Right cardiac atrium (tissue), 5 donors: ENCODE measurements at regions of chr2 and their contacts with region 1.

Region 1: GRCh38 chr2:196291873-196292800 is 120.8 kb upstream of the STK17B start:
- DNase-seq: no peak
- ATAC-seq: peak in 1 of 2 donors; percentile 7
- H3K4me3 ChIP-seq: no peak overlapping the region
- H3K27ac ChIP-seq: no peak overlapping the region
- H3K4me1 ChIP-seq: no peaks in the 10 kb centered on the region
- H3K27me3 ChIP-seq: no peaks in the 10 kb centered on the region

Region 2: DNA sequence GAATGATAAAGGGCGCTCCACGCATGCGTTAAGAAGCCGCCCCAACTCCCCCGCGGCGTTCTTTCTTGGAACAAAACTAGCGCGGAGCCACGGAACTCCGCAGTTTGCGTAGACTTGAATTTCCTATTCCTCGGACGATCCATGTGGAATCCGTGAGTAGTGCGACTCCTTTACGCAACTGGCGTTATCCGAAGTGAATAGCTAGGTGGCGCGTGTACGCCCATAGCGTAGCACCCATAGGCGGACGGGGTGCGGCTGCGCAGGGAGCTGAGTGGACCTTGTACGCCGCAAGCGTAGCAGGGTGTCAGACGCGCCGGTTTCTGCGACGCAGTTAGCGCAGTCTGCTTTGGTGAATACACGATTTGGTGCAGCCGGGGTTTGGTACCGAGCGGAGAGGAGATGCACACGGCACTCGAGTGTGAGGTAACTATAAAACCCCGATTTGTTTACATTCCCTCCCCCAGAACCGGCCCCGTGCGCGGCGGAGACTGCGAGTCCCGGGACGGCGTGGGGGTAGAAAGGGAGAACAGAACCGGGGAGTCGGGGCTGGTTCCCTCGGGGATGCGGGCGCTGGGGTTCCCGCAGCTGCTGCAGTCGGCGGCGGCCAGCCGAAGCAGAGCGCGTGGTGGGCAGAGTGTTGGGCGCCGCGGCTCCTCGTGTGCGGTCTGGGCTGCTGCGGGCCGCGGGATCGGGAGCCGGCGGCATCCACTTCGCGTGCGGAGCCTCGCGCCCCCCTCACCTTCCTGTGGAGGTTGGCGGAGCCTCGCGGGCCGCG is 635.1 kb before region 1 on chr2 and contains the start of gene SLC39A10:
- intact Hi-C with region 1: no loop called
- DNase-seq: peak; percentile 97 to 99 (median 98)
- ATAC-seq: peak; percentile 94 to 95
- H3K4me3 ChIP-seq: peak within 1 kb of the TSS; percentile 92
- H3K27ac ChIP-seq: peak within 1 kb of the TSS; percentile 86
- H3K4me1 ChIP-seq: no peaks in the 10 kb centered on the region
- H3K27me3 ChIP-seq: no peaks in the 10 kb centered on the region
- total RNA-seq, gene SLC39A10: 13.3 to 17.9 (median 14.5) TPM

Region 3: GRCh38 chr2:196453613-196454047 is 161.5 kb after region 1 on chr2:
- intact Hi-C with region 1: loop called in 3 of 4 experiments (anchors 5 to 10 kb)
- DNase-seq: no peak
- ATAC-seq: peak in 1 of 2 donors; percentile 63
- H3K4me3 ChIP-seq: no peak overlapping the region
- H3K27ac ChIP-seq: no peak overlapping the region
- H3K4me1 ChIP-seq: no peaks in the 10 kb centered on the region
- H3K27me3 ChIP-seq: no peaks in the 10 kb centered on the region

Region 4: DNA sequence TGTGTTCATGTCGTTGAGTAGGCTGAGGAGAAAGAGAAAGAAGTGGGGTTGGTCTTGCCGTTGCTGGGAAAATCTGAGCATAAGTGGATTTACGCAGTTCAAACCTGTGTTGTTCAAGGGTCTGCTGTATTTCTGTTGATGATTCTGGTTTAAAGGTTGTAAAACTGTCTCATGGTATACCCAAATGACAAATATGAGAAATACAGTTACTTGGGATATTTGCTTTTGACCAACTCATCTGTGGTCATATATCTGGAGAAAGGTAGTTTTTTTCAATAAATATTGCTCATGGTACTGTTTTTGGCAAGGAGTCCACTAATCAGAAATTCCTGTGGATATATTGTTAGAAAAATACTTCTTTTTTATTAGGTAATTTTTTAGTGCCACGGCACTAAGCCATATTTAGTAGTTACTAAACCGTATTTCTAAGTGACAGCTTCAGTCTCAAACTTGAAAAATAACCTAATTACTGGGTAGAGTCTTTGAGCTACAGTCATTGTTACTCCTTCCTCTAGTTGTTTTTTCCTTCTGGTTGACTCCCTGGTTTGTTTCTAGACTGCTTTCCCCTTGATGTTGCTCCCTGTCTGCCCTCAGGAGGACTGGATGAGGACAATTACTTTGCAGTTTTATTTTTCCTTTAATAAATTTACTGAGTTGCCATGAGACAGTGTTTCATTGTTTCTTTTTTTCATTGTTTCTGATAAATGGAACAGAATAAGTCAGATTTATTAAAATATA is 1255.2 kb after region 1 on chr2:
- intact Hi-C with region 1: no loop called
- DNase-seq: no peak
- ATAC-seq: no peak
- H3K4me3 ChIP-seq: no peak overlapping the region
- H3K27ac ChIP-seq: no peak overlapping the region
- H3K4me1 ChIP-seq: no peaks in the 10 kb centered on the region
- H3K27me3 ChIP-seq: no peaks in the 10 kb centered on the region